ENCODE measurements at regions of chr20 and their contacts with region 1.

Region 1: DNA sequence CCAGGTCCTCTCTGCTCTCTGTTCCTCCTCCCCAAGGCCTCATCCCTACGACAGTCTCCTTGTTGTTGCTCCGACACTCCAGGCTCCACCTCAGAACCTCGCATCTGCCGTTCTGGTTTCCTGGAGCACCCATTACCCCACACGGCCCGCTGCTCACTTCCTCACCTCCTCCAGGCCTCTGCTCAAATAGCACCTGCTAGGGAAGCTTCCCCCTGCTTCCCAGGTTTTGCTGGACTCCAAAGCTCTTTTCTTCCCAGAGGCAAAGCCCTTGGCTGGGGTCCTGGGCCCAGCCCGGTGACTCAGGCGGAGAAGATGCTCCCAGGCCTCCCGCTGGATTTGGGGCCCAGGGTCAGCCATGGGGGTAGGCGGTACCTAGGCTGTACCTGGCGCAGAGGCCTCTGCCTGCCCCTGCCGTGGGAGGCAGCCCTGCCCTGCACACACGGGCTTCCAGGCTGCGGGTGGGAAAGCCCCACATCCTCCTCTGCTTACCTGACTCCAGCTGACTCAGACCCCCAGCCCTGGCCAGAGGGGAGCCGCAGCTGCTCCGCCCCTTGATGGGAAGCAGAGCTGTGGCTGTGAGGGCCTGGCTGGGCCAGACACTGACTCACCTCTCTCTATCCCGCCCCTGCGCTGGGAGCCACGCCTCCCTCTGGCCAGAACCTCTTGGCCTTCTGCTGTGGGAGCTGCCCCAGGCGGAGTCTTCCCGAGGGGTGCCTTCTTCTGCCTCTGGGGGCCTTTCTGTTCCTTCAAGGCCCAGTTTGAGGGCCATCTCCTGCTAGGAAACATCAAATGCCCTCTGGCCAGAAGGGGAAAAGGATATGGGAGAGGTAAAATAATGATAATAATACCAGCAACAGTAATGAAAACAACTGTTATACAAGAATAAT is 130.5 kb downstream of the CEBPB start:
- DNase-seq: peak; percentile 97
- H3K4me3 Mint-ChIP-seq: peak overlapping the region; percentile 85
- H3K27ac Mint-ChIP-seq: peak overlapping the region; percentile 92
- H3K4me1 Mint-ChIP-seq: peaks cover 32% of the 10 kb centered on the region
- H3K27me3 Mint-ChIP-seq: no peaks in the 10 kb centered on the region
- CTCF ChIP-seq: no peak

Region 2: DNA sequence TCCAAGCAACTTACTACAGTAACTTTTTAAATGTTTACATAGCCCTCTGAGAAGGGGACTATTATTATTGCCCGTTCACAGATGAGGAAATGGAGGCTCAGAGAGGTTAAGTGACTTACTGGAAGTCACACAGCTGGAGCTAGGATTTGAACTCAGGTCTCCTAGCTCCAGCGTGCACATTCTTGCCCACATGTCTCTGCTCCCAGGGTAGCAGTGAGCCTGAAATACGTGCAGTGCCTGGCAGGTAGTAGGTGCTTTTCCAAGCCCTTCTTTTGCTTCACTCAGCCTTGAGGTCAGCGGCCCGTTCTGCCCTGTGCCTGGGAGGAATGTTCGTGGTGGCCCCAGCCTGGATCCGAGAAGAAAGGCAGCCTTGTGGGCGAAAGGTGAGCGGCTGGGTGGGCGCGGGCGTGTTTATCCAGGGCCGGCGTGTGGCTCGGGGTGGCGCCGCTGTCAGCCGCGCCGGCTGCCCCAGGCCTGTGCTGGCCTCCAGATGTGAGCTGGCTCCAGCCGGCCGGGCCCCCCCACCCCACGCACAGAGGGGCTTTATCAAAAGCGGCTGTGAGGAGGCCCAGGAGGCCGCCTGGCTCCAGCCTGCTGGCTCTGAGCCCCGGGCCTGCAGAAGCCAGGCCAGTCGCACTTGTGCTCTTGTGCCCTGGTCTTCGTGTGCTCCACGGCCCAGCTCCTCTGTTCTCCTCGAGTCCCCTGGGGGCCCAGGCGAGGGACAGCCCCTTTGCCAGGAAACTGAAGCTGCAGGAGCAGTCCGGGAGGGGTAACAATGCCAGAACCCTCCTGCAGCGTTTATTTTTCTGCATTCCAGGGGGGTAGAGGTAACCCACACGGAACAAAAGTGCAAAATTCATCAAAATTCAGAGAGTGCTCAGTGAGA is 266.3 kb before region 1 on chr20:
- CTCF ChIA-PET with region 1: no interaction called
- POLR2A ChIA-PET with region 1: no interaction called
- intact Hi-C with region 1: no loop called
- DNase-seq: no peak
- H3K4me3 Mint-ChIP-seq: no peak overlapping the region
- H3K27ac Mint-ChIP-seq: no peak overlapping the region
- H3K4me1 Mint-ChIP-seq: no peaks in the 10 kb centered on the region
- H3K27me3 Mint-ChIP-seq: no peaks in the 10 kb centered on the region
- CTCF ChIP-seq: no peak

Region 3: DNA sequence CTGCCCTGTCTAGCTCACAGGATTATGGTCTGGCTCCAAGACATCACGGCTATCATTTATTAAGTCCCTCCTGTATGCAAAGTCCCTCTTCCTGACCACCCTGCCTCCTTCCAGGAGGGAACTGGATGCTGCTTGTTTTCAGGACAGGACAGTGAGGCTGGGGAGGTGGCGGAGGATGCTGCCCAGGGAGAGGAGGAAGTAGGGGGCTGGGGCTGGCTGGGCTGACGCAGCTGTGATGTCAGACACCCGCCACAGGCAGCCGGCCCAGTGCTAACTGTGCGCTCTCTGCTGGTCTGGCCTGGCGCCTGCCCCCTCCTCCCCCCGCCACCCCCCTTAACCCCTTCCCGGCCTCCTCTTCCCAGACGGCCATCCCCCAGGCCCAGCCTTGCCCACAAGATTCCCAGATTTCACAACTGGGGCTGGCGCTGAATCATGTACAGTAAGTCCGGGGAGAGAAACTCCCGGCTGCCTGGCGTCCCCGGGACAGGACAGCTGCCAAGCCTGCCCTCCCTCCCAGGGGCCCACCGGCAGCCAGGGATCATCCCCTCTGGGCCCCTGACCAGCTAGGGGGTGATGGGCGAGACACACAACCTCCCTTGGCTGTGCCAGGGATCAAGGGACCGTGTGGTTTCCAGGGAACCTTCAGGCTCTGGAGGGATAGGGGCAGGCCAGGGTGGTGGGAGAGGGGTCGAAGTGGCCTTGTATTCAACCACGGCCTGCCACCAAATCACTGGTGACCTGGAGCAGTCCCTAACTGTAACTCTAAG is 12.5 kb before region 1 on chr20:
- CTCF ChIA-PET with region 1: interaction called, 4 read pairs
- POLR2A ChIA-PET with region 1: interaction called, 43 read pairs
- intact Hi-C with region 1: no loop called
- DNase-seq: peak; percentile 99
- H3K4me3 Mint-ChIP-seq: no peak overlapping the region
- H3K27ac Mint-ChIP-seq: peak overlapping the region; percentile 49
- H3K4me1 Mint-ChIP-seq: peaks cover 66% of the 10 kb centered on the region
- H3K27me3 Mint-ChIP-seq: no peaks in the 10 kb centered on the region
- CTCF ChIP-seq: peak; percentile 6

Region 4: DNA sequence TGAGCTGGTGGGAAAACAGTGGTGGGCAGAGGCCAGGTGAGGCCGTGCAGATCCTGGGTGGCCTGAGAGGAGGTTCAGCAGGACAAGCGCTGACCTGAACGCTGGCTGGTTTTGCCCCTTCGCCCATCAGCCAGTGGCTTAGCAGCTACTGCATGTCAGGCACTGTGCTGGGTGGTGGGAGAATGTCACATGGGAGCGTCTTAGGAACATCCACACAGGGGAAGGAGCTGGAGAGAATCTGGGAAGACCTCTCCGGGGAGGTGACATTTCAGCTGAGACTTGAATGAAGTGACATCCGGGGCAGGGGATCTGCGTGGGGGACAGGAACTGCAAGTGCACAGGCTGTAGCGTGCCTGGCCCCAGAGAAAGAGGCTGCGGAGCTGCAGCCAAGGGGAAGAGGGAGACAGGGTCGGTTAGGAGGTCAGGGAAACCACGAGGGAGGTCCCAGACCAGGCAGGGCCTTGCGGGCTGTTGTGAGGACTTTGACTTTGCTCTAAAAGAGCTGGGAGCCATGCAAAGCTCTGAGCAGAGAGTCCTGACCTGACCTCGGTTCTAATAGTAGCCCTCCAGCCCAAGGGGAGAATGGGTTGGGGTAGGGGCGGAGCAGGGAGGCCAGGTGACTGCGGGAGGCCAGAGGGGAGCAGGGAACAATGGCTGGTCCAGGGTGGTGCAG is 32.3 kb after region 1 on chr20:
- CTCF ChIA-PET with region 1: interaction called, 3 read pairs
- POLR2A ChIA-PET with region 1: interaction called, 20 read pairs
- intact Hi-C with region 1: no loop called
- DNase-seq: no peak
- H3K4me3 Mint-ChIP-seq: no peak overlapping the region
- H3K27ac Mint-ChIP-seq: peak overlapping the region; percentile 1
- H3K4me1 Mint-ChIP-seq: peaks cover 14% of the 10 kb centered on the region
- H3K27me3 Mint-ChIP-seq: no peaks in the 10 kb centered on the region
- CTCF ChIP-seq: no peak

Region 5: DNA sequence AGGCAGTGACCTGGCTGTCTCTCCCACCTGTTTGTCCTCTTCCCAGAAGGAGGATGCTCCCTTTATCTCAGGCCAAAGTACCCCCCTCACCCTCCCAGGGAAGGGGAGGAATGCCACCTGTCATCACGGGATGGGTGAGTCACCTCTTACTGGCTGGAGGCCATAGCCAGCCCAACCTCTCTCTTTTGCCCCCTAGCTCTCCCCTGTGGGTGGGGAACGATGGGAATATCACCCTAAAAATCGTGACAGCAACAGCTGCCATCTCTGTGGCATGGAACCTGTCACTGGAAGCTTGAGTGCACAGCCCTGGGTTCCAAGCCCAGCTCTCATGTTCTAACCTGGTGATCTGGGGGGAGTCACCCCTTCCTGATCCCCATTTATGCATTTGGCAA is 51.6 kb after region 1 on chr20:
- CTCF ChIA-PET with region 1: no interaction called
- POLR2A ChIA-PET with region 1: interaction called, 25 read pairs
- intact Hi-C with region 1: no loop called
- DNase-seq: peak; percentile 68
- H3K4me3 Mint-ChIP-seq: peak overlapping the region; percentile 40
- H3K27ac Mint-ChIP-seq: peak overlapping the region; percentile 90
- H3K4me1 Mint-ChIP-seq: peaks cover 70% of the 10 kb centered on the region
- H3K27me3 Mint-ChIP-seq: no peaks in the 10 kb centered on the region
- CTCF ChIP-seq: no peak

Region 6: GRCh38 chr20:50415516-50416113 is 94.5 kb after region 1 on chr20:
- CTCF ChIA-PET with region 1: no interaction called
- POLR2A ChIA-PET with region 1: interaction called, 45 read pairs
- intact Hi-C with region 1: no loop called
- DNase-seq: peak; percentile 99
- H3K4me3 Mint-ChIP-seq: peak overlapping the region; percentile 59
- H3K27ac Mint-ChIP-seq: peak overlapping the region; percentile 96
- H3K4me1 Mint-ChIP-seq: peaks cover 43% of the 10 kb centered on the region
- H3K27me3 Mint-ChIP-seq: no peaks in the 10 kb centered on the region
- CTCF ChIP-seq: no peak

Region 7: GRCh38 chr20:50434653-50435396 is 113.7 kb after region 1 on chr20:
- CTCF ChIA-PET with region 1: no interaction called
- POLR2A ChIA-PET with region 1: interaction called, 35 read pairs
- intact Hi-C with region 1: no loop called
- DNase-seq: peak; percentile 98
- H3K4me3 Mint-ChIP-seq: no peak overlapping the region
- H3K27ac Mint-ChIP-seq: peak overlapping the region; percentile 94
- H3K4me1 Mint-ChIP-seq: peaks cover 46% of the 10 kb centered on the region
- H3K27me3 Mint-ChIP-seq: no peaks in the 10 kb centered on the region
- CTCF ChIP-seq: no peak

Region 8: GRCh38 chr20:50856036-50856756 is 535.0 kb after region 1 on chr20:
- CTCF ChIA-PET with region 1: no interaction called
- POLR2A ChIA-PET with region 1: no interaction called
- intact Hi-C with region 1: no loop called
- DNase-seq: peak; percentile 79
- H3K4me3 Mint-ChIP-seq: no peak overlapping the region
- H3K27ac Mint-ChIP-seq: peak overlapping the region; percentile 67
- H3K4me1 Mint-ChIP-seq: peaks cover 19% of the 10 kb centered on the region
- H3K27me3 Mint-ChIP-seq: no peaks in the 10 kb centered on the region
- CTCF ChIP-seq: no peak